ENCODE measurements at regions of chr9 and their contacts with region 1.

Region 1: GRCh38 chr9:130866474-130866965 is 30.1 kb downstream of the QRFP start:
- DNase-seq: peak; percentile 84
- H3K4me3 ChIP-seq: no peak overlapping the region
- H3K27ac ChIP-seq: no peak overlapping the region
- H3K4me1 ChIP-seq: peaks cover 6% of the 10 kb centered on the region
- H3K27me3 ChIP-seq: no peaks in the 10 kb centered on the region
- CTCF ChIP-seq: peak; percentile 86 to 97
- POLR2A ChIP-seq: no peak

Region 2: DNA sequence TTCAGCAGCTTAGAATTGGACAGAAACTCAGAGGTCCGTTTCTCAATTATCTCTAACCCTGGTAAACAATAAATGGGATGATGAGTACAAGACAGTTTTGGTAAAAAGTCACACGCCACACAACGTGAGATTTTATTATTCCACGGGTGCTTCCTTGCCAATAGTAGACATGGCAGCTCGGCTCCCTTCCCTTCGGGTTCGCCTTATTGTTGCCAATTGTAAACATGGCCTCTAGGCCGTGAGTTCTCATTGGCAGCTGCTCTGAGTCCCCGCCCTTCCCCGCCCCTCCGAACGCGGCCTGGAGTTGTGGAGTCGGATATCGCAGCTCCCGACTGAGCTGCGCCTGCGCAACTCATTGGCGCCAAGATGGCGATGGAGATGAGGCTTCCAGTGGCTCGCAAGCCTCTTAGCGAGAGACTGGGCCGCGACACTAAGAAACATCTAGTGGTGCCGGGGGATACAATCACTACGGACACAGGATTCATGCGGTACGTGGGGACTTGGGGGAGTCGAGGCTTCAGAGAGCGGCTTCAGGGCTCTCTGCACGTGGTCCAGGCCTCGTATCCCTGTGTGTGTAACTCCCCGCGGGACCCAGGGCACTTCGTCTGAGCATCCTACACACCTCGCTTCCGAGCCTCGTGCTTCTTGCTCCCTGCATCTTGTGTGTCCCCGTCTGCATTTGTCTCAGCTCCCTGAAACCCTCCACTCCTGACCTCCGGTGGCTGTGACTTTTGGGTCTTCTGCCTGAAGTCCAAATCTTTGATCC is 172.9 kb before region 1 on chr9 and contains the start of gene EXOSC2:
- CTCF ChIA-PET with region 1: interaction called, 327 read pairs
- POLR2A ChIA-PET with region 1: no interaction called
- dilution Hi-C with region 1: loop called (anchors 25 kb)
- intact Hi-C with region 1: no loop called
- DNase-seq: peak; percentile 99
- H3K4me3 ChIP-seq: peak within 1 kb of the TSS; percentile 57 to 79 (median 78)
- H3K27ac ChIP-seq: peak within 1 kb of the TSS; percentile 47
- H3K4me1 ChIP-seq: peaks cover 9% of the 10 kb centered on the region
- H3K27me3 ChIP-seq: no peaks in the 10 kb centered on the region
- CTCF ChIP-seq: no peak
- POLR2A ChIP-seq: peak; percentile 98
- total RNA-seq, gene EXOSC2: 44.4 and 46.4 TPM in 2 replicates

Region 3: GRCh38 chr9:130701056-130702022 is 165.2 kb before region 1 on chr9:
- CTCF ChIA-PET with region 1: interaction called, 327 read pairs
- POLR2A ChIA-PET with region 1: no interaction called
- dilution Hi-C with region 1: loop called (anchors 25 kb)
- intact Hi-C with region 1: loop called (anchors 1 kb)
- DNase-seq: peak; percentile 84
- H3K4me3 ChIP-seq: no peak overlapping the region
- H3K27ac ChIP-seq: no peak overlapping the region
- H3K4me1 ChIP-seq: peaks cover 2% of the 10 kb centered on the region
- H3K27me3 ChIP-seq: no peaks in the 10 kb centered on the region
- CTCF ChIP-seq: peak; percentile 97 to 99
- POLR2A ChIP-seq: no peak

Region 4: GRCh38 chr9:130707225-130707976 is 159.1 kb before region 1 on chr9:
- CTCF ChIA-PET with region 1: interaction called, 327 read pairs
- POLR2A ChIA-PET with region 1: no interaction called
- dilution Hi-C with region 1: no loop called
- intact Hi-C with region 1: loop called (anchors 1 kb)
- DNase-seq: peak; percentile 65
- H3K4me3 ChIP-seq: no peak overlapping the region
- H3K27ac ChIP-seq: no peak overlapping the region
- H3K4me1 ChIP-seq: no peaks in the 10 kb centered on the region
- H3K27me3 ChIP-seq: no peaks in the 10 kb centered on the region
- CTCF ChIP-seq: peak; percentile 36 to 66
- POLR2A ChIP-seq: no peak

Region 5: DNA sequence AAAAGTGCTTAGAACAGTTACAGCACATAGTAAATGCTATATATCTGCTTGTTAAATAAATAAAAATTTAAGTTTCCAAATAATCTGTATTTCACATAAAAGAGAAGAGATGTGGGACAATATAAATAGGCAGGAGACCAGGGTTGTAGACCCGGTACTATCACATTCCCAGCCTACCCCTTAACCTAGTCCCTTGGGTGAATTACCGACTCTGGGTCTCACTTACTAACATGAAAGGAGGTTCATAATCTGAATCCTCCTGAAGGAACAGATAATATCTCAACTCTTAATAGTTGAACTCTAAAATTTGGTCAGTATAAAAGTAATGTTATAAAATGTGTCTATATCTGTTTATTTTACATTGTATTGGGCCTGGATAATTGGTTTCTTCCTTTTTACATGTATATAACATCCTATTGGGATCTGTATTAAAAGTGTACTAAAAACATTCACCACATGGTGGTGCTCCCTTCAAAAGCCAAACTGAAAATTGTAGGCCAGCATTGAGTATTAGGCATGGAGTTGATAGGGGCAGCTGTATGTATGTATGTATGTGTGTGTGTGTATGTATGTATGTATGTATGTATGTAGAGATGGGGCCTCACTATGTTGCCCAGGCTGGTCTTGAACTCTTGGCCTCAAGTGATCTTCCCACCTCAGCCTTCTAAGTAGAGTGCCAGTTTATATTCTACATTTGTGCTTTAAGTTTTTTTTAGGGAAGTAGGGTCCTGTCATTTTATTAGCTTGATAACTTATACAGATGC is 95.7 kb before region 1 on chr9:
- CTCF ChIA-PET with region 1: interaction called, 78 read pairs
- POLR2A ChIA-PET with region 1: no interaction called
- dilution Hi-C with region 1: no loop called
- intact Hi-C with region 1: loop called (anchors 1 kb)
- DNase-seq: peak; percentile 81
- H3K4me3 ChIP-seq: no peak overlapping the region
- H3K27ac ChIP-seq: no peak overlapping the region
- H3K4me1 ChIP-seq: peaks cover 27% of the 10 kb centered on the region
- H3K27me3 ChIP-seq: no peaks in the 10 kb centered on the region
- CTCF ChIP-seq: peak; percentile 30 to 47
- POLR2A ChIP-seq: no peak

Region 6: GRCh38 chr9:130940693-130941576 is 74.4 kb after region 1 on chr9:
- CTCF ChIA-PET with region 1: interaction called, 8 read pairs
- POLR2A ChIA-PET with region 1: no interaction called
- dilution Hi-C with region 1: no loop called
- intact Hi-C with region 1: loop called (anchors 2 kb)
- DNase-seq: peak; percentile 44
- H3K4me3 ChIP-seq: no peak overlapping the region
- H3K27ac ChIP-seq: no peak overlapping the region
- H3K4me1 ChIP-seq: peaks cover 3% of the 10 kb centered on the region
- H3K27me3 ChIP-seq: peaks cover 21 to 35% of the 10 kb centered on the region in 2 experiments
- CTCF ChIP-seq: peak; percentile 64 to 89
- POLR2A ChIP-seq: no peak

Measured in endothelial cell of umbilical vein (primary cell).